HCT116 (cell line): ENCODE measurements at regions of chr1 and their contacts with region 1.

Region 1: DNA sequence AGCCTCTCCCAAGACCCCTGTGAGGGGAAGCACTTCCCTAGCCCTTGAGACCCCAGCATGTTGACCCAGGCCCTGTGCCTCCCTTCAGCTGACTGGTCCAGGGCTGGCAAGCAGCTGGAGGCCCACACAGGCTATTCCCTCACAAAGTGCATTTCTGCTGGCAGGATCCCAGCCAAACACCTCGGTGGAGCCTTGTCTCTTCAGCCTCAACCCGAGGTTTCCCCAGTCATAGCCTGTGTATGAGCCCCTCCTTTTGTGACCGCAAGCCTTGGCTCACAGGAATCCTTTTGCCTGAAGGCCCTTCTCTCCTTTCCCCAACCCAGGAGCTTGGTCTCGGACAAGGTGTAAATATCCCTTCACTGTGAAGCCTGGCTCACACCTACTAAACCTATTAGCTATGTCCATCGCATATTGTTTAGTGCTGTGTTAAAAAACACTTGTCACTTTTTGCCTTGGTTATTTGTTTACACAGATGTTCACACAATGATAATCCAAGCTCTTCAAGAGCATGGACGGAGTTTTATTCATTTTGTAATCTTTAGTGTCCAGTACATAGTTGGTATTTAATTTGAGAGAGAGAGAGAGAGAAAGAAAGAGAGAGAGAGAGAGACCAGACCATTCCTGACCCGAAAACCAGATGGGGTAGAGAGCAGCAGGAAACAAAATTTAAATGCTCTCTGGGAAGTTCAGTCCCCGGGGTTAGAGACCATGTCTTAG is 8.5 kb upstream of the CD247 start:
- DNase-seq: no peak
- ATAC-seq: no peak
- H3K4me3 ChIP-seq: no peak overlapping the region
- H3K27ac ChIP-seq: no peak overlapping the region
- H3K4me1 ChIP-seq: no peaks in the 10 kb centered on the region
- H3K27me3 ChIP-seq: no peaks in the 10 kb centered on the region; the same call in 1 of the 2 replicates
- CTCF ChIP-seq: no peak
- POLR2A ChIP-seq: no peak
- RAD21 ChIP-seq: no peak

Region 2: GRCh38 chr1:167373398-167373797 is 153.4 kb before region 1 on chr1:
- CTCF ChIA-PET with region 1: no interaction called
- POLR2A ChIA-PET with region 1: no interaction called
- RAD21 ChIA-PET with region 1: no interaction called
- intact Hi-C with region 1: no loop called
- DNase-seq: no peak
- ATAC-seq: no peak
- H3K4me3 ChIP-seq: no peak overlapping the region
- H3K27ac ChIP-seq: no peak overlapping the region
- H3K4me1 ChIP-seq: no peaks in the 10 kb centered on the region
- H3K27me3 ChIP-seq: no peaks in the 10 kb centered on the region
- CTCF ChIP-seq: no peak
- POLR2A ChIP-seq: no peak
- RAD21 ChIP-seq: no peak

Region 3: GRCh38 chr1:167542109-167543032 is 15.5 kb after region 1 on chr1:
- CTCF ChIA-PET with region 1: interaction called, 14 read pairs
- POLR2A ChIA-PET with region 1: no interaction called
- RAD21 ChIA-PET with region 1: no interaction called
- intact Hi-C with region 1: no loop called
- DNase-seq: no peak
- ATAC-seq: no peak
- H3K4me3 ChIP-seq: no peak overlapping the region
- H3K27ac ChIP-seq: no peak overlapping the region
- H3K4me1 ChIP-seq: no peaks in the 10 kb centered on the region
- H3K27me3 ChIP-seq: no peaks in the 10 kb centered on the region
- CTCF ChIP-seq: no peak
- POLR2A ChIP-seq: no peak
- RAD21 ChIP-seq: no peak